ENCODE measurements at regions of chr14 and their contacts with region 1.

Region 1: GRCh38 chr14:77076113-77076631 is 21.9 kb upstream of the CIPC start:
- DNase-seq: no peak
- ATAC-seq: no peak
- H3K4me3 Mint-ChIP-seq: no peak overlapping the region
- H3K27ac Mint-ChIP-seq: no peak overlapping the region
- H3K4me1 Mint-ChIP-seq: no peaks in the 10 kb centered on the region
- H3K27me3 Mint-ChIP-seq: no peaks in the 10 kb centered on the region

Region 2: GRCh38 chr14:76881348-76881747 is 194.8 kb before region 1 on chr14:
- CTCF ChIA-PET with region 1: interaction called, 371 read pairs
- POLR2A ChIA-PET with region 1: no interaction called
- DNase-seq: no peak
- ATAC-seq: no peak
- H3K4me3 Mint-ChIP-seq: no peak overlapping the region
- H3K27ac Mint-ChIP-seq: no peak overlapping the region
- H3K4me1 Mint-ChIP-seq: peaks cover 12% of the 10 kb centered on the region
- H3K27me3 Mint-ChIP-seq: peaks cover 2% of the 10 kb centered on the region

Region 3: DNA sequence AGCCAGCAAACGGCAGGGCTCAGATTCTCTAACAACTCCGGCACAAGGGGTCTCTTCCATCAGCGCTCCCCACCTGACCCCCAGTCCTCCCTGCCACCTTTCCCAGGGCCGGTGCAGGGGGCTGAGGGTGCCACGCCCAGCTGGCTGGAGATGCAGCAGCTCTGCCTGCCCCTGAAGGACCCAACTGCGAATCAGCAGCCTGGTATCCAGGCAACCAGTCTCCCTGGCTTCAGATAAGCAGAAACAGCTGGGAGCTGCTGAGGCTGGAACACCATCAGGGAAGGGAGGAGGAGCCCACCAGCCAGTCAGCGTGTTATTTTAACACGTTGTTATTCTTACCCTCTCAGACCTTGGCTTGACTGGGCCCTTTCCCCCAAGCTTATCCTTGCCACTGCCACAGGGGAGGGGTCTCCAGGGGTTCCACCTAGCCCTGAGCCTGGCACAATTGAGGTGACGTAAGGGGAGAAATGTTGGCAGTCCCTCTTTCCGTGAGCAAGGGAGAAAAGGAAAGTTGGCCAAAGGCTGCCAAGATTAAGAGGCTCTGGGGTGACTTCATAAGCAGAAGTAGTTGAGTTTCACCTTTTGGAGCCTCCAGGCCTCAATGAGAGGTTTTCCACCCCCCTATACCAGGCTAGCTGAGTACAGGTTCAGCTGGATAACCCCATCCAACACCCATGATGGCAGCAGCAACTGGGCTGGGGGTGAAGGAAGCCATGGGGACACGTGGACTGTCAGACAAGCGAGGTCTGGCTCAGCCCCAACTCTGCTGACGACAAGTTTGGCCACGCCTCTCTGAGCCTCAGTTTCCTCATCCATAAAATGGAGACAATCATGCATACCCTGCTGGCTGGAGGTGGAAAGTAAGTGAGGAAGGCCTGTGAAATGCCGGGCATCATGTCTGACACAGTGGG is 138.7 kb before region 1 on chr14:
- CTCF ChIA-PET with region 1: no interaction called
- POLR2A ChIA-PET with region 1: no interaction called
- DNase-seq: no peak
- ATAC-seq: no peak
- H3K4me3 Mint-ChIP-seq: no peak overlapping the region
- H3K27ac Mint-ChIP-seq: no peak overlapping the region
- H3K4me1 Mint-ChIP-seq: peaks cover 14% of the 10 kb centered on the region
- H3K27me3 Mint-ChIP-seq: no peaks in the 10 kb centered on the region

Region 4: GRCh38 chr14:77033622-77034521 is 42.3 kb before region 1 on chr14:
- CTCF ChIA-PET with region 1: no interaction called
- POLR2A ChIA-PET with region 1: no interaction called
- DNase-seq: peak; percentile 79
- ATAC-seq: peak; percentile 74
- H3K4me3 Mint-ChIP-seq: peak overlapping the region; percentile 93
- H3K27ac Mint-ChIP-seq: peak overlapping the region; percentile 94
- H3K4me1 Mint-ChIP-seq: peaks cover 81% of the 10 kb centered on the region
- H3K27me3 Mint-ChIP-seq: no peaks in the 10 kb centered on the region

Region 5: GRCh38 chr14:77086017-77086736 is 10.0 kb after region 1 on chr14:
- CTCF ChIA-PET with region 1: interaction called, 48 read pairs
- POLR2A ChIA-PET with region 1: interaction called, 3 read pairs
- DNase-seq: no peak
- ATAC-seq: peak; percentile 49
- H3K4me3 Mint-ChIP-seq: no peak overlapping the region
- H3K27ac Mint-ChIP-seq: no peak overlapping the region
- H3K4me1 Mint-ChIP-seq: peaks cover 4% of the 10 kb centered on the region
- H3K27me3 Mint-ChIP-seq: peaks cover 6% of the 10 kb centered on the region